PC-3 (cell line): ENCODE measurements at regions of chr7 and their contacts with region 1.

Region 1: DNA sequence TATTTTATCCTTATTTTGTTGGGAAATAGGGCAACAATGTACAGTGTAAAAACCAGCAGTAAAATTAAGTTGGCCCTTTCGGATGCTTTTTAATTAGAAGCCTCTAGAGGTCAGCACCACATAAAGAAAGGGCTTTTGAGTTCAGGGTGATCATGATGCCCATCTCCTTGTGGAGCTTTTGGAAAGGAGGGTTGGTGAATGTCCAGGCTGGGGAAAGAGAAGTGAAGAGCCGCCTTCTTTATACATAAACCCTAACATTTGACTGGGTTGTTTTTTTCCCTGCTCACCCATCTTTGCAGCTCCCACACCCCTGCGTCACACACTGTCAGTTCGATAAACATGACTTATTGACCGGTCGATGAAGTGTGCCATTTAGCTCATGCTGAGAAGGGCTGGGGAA is 29.8 kb downstream of the MTURN start:
- DNase-seq: peak; percentile 76
- ATAC-seq: peak; percentile 42; the same call in 1 of the 2 replicates
- H3K4me3 ChIP-seq: no peak overlapping the region
- H3K27ac ChIP-seq: no peak overlapping the region
- H3K4me1 ChIP-seq: peaks cover 58% of the 10 kb centered on the region
- H3K27me3 ChIP-seq: no peaks in the 10 kb centered on the region
- CTCF ChIP-seq: peak; percentile 80

Region 2: DNA sequence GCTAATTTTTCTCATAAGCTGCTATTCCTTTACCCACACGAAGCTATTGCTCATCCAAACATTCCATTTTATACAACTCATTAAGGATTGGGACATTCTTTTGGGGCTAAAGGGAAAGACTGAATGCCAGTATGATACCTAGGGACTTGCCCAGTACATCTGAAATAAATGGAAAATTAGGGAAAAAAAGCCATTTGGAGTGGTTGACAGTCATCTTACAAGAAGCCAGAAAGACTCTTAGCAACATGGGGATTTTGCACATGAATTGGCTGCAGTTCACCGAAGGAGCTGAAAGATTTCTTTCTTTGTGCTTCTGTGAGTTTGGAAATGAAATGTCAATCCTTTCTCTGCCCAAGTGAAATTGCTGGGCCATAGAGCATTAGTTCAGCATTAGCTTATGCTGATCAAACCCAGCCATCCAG is 73.1 kb before region 1 on chr7:
- CTCF ChIA-PET with region 1: no interaction called
- POLR2A ChIA-PET with region 1: no interaction called
- intact Hi-C with region 1: no loop called
- DNase-seq: peak; percentile 85
- ATAC-seq: peak; percentile 94
- H3K4me3 ChIP-seq: no peak overlapping the region
- H3K27ac ChIP-seq: peak overlapping the region; percentile 25
- H3K4me1 ChIP-seq: peaks cover 21% of the 10 kb centered on the region
- H3K27me3 ChIP-seq: no peaks in the 10 kb centered on the region
- CTCF ChIP-seq: no peak

Region 3: GRCh38 chr7:30225863-30226613 is 61.5 kb after region 1 on chr7:
- CTCF ChIA-PET with region 1: interaction called, 4 read pairs
- POLR2A ChIA-PET with region 1: no interaction called
- intact Hi-C with region 1: loop called (anchors 2 kb)
- DNase-seq: peak; percentile 90
- ATAC-seq: peak; percentile 93
- H3K4me3 ChIP-seq: peak overlapping the region; percentile 41
- H3K27ac ChIP-seq: peak overlapping the region; percentile 82
- H3K4me1 ChIP-seq: peaks cover 32% of the 10 kb centered on the region
- H3K27me3 ChIP-seq: no peaks in the 10 kb centered on the region
- CTCF ChIP-seq: no peak

Region 4: DNA sequence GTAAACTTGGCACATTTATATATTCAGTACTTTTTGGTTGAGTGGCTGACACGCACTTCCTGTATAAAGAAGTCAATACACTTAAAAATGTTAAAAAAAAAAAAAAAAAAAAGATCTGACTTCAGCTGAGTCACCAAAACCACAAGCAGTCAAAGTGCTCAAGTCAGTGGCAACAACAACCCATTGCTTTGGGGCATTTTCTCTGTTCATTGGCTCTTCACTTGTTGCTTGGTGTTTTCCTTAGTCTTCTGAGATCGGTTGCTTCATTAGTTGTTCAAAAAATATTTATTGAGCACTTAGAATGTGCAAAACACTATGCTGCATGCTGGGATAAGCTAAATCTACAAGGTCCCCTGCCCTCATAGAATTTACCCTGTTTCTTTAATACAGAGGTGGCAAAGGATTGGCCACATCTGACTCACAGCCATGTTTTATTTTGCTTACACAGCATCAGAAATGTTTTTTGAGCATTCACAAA is 183.6 kb after region 1 on chr7:
- CTCF ChIA-PET with region 1: interaction called, 4 read pairs
- POLR2A ChIA-PET with region 1: no interaction called
- intact Hi-C with region 1: loop called (anchors 1 kb)
- DNase-seq: peak; percentile 80
- ATAC-seq: peak; percentile 85
- H3K4me3 ChIP-seq: peak overlapping the region; percentile 54
- H3K27ac ChIP-seq: peak overlapping the region; percentile 81
- H3K4me1 ChIP-seq: peaks cover 37% of the 10 kb centered on the region
- H3K27me3 ChIP-seq: no peaks in the 10 kb centered on the region
- CTCF ChIP-seq: no peak

Region 5: GRCh38 chr7:30504347-30505173 is 340.0 kb after region 1 on chr7 and contains the start of gene GGCT:
- CTCF ChIA-PET with region 1: no interaction called
- POLR2A ChIA-PET with region 1: no interaction called
- intact Hi-C with region 1: loop called (anchors 10 kb)
- DNase-seq: peak; percentile 97
- ATAC-seq: peak; percentile 95
- H3K4me3 ChIP-seq: peak within 1 kb of the TSS; percentile 98
- H3K27ac ChIP-seq: peak within 1 kb of the TSS; percentile 36; the same call in 1 of the 2 replicates
- H3K4me1 ChIP-seq: peaks cover 43% of the 10 kb centered on the region
- H3K27me3 ChIP-seq: no peaks in the 10 kb centered on the region
- CTCF ChIP-seq: no peak
- total RNA-seq, gene GGCT: 64.1 and 67.6 TPM in 2 replicates